Activated T-helper 1 cell treated with anti-CD3 and anti-CD28 coated beads, Interleukin-12 subunit alpha, Interleukin-12 subunit beta, Interleukin-2, Interleukin-4 antibody, amounts not matched to agents 30 ng/mL and 10 ng/mL and 1 ng/mL, durations not matched to agents 14 hours and 24 hours and 36 hours (primary cell): ENCODE measurements at regions of chr12 and their contacts with region 1.

Region 1: GRCh38 chr12:118164798-118165486 is 29.0 kb downstream of the PEBP1 start:
- DNase-seq: no peak
- H3K4me3 Mint-ChIP-seq: no peak overlapping the region
- H3K27ac Mint-ChIP-seq: no peak overlapping the region
- H3K4me1 Mint-ChIP-seq: peaks cover 24% of the 10 kb centered on the region
- H3K27me3 Mint-ChIP-seq: no peaks in the 10 kb centered on the region

Region 2: DNA sequence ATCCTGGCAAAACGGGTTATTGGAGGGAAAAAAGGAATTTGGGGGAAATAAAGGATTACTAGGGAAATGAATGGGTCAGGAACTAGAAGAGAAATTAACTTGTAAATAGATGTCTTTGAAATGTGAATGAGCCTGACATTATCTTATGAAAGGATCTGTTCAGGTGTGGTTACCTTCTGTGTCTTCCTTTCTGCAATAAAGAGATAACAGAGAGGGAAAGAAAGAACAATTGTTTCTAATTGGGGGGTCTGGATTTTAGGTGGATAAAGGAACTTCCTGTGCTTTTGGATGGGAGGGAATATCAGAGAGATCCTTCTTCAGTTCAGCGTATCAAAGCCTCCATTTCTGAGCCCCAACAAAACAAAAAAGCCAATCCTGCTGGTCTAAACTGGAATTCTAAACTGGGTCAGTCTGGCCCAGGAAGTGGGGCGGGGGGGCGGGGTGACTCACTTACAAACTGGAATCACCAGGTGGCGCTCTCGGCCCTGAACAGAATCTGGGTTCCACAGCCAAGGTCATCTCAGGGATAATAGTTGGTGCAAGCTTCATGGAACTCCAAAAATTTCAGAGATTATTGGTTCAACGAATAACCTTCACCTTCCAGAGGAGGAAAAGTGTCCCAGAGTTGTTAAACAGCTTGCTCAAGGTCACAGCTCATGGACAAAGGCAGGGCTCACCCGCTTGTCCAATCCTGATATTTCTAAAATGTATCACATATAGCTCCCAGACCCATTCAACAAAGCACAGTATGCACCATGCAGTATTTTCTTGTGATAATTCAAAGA is 44.2 kb before region 1 on chr12:
- intact Hi-C with region 1: loop called (anchors 1 kb)
- DNase-seq: peak; percentile 28
- H3K4me3 Mint-ChIP-seq: no peak overlapping the region
- H3K27ac Mint-ChIP-seq: no peak overlapping the region
- H3K4me1 Mint-ChIP-seq: peaks cover 14% of the 10 kb centered on the region
- H3K27me3 Mint-ChIP-seq: peaks cover 2% of the 10 kb centered on the region

Region 3: DNA sequence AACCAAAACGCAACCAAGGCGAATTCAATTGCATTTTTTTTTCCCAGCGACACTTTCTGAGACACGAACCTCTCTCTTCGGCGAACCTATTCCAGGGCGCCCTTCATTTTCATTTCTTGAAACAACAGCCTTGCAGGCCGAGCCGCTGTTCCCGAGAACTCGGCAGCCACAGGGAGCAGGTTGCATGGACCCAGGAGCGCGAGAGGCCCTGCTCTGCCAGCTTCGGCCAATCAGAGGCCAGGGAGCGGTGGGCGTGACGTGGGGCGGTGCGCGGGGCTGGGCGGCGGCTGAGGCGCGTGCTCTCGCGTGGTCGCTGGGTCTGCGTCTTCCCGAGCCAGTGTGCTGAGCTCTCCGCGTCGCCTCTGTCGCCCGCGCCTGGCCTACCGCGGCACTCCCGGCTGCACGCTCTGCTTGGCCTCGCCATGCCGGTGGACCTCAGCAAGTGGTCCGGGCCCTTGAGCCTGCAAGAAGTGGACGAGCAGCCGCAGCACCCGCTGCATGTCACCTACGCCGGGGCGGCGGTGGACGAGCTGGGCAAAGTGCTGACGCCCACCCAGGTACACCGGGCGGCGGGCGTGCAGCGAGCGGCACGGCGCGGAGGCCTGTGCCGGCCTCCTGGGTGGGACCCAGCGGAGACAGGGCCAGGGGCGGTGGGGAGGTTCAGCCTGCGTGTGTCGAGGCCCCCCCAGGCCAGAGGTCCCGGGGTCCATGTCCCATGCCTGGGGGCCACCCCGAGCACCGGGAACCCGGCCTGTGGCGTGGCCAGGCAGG is 29.0 kb before region 1 on chr12 and contains the start of gene PEBP1:
- intact Hi-C with region 1: loop called (anchors 1 kb)
- DNase-seq: peak; percentile 93
- H3K4me3 Mint-ChIP-seq: peak within 1 kb of the TSS; percentile 95
- H3K27ac Mint-ChIP-seq: peak within 1 kb of the TSS; percentile 89
- H3K4me1 Mint-ChIP-seq: peaks cover 18% of the 10 kb centered on the region
- H3K27me3 Mint-ChIP-seq: no peaks in the 10 kb centered on the region
- total RNA-seq, gene PEBP1: 200 and 205 TPM in 2 replicates

Region 4: GRCh38 chr12:118183705-118184104 is 18.8 kb after region 1 on chr12:
- intact Hi-C with region 1: loop called (anchors 2 kb)
- DNase-seq: no peak
- H3K4me3 Mint-ChIP-seq: no peak overlapping the region
- H3K27ac Mint-ChIP-seq: no peak overlapping the region
- H3K4me1 Mint-ChIP-seq: peaks cover 9% of the 10 kb centered on the region
- H3K27me3 Mint-ChIP-seq: no peaks in the 10 kb centered on the region

Region 5: GRCh38 chr12:118307069-118307954 is 142.4 kb after region 1 on chr12:
- intact Hi-C with region 1: loop called (anchors 2 kb)
- DNase-seq: peak; percentile 2
- H3K4me3 Mint-ChIP-seq: peak overlapping the region; percentile 70
- H3K27ac Mint-ChIP-seq: peak overlapping the region; percentile 62
- H3K4me1 Mint-ChIP-seq: peaks cover 33% of the 10 kb centered on the region
- H3K27me3 Mint-ChIP-seq: no peaks in the 10 kb centered on the region

Region 6: GRCh38 chr12:118357257-118358007 is 192.5 kb after region 1 on chr12:
- intact Hi-C with region 1: loop called (anchors 5 kb)
- DNase-seq: no peak
- H3K4me3 Mint-ChIP-seq: peak overlapping the region; percentile 99
- H3K27ac Mint-ChIP-seq: peak overlapping the region; percentile 95
- H3K4me1 Mint-ChIP-seq: peaks cover 58% of the 10 kb centered on the region
- H3K27me3 Mint-ChIP-seq: no peaks in the 10 kb centered on the region